HEK293 (cell line): ENCODE measurements at regions of chr12 and their contacts with region 1.

Region 1: DNA sequence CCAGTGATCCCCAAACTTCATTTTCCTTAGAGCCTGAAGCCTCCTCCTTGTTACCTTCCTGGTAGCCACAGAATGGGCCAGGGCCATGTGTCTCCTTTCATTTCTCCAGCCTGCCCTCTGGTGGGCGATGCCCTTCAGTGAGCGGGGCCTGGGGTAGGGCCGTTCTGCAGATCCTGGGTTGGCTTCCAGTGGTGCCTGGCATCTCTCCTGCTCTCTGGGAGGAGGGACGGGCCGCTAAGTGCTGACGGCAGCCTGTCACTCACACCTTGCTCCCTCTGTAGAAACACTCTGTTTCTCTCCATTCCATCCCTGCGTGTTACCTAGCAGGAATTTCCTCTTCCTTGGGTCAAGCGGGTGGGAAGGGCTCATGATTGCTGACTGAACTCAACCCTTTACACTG is 232.1 kb downstream of the CACNA1C start:
- H3K4me3 ChIP-seq: no peak overlapping the region
- H3K27ac ChIP-seq: no peak overlapping the region
- H3K4me1 ChIP-seq: no peaks in the 10 kb centered on the region
- CTCF ChIP-seq: peak; percentile 72

Region 2: DNA sequence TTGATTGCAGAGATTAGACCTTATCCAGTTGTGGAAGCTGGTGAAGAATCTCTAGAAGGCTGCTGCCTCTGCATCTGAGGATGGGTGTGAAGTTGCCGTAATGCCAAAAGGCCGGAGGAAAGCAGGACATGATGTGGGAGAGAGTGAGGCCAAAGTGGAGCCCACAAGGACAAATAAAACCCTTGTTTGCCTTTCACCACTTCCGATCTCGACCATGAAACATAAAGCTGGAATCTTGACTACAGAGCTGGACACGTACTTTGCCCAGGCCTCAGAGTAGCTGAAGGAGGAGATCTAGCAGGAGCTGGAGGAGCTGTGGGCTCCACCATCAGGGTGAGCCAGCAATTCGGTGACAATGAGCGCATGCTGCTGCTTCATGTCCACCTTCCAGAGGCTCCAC is 237.1 kb before region 1 on chr12:
- CTCF ChIA-PET with region 1: interaction called, 10 read pairs
- POLR2A ChIA-PET with region 1: no interaction called
- H3K4me3 ChIP-seq: no peak overlapping the region
- H3K27ac ChIP-seq: no peak overlapping the region
- H3K4me1 ChIP-seq: no peaks in the 10 kb centered on the region
- CTCF ChIP-seq: no peak

Region 3: DNA sequence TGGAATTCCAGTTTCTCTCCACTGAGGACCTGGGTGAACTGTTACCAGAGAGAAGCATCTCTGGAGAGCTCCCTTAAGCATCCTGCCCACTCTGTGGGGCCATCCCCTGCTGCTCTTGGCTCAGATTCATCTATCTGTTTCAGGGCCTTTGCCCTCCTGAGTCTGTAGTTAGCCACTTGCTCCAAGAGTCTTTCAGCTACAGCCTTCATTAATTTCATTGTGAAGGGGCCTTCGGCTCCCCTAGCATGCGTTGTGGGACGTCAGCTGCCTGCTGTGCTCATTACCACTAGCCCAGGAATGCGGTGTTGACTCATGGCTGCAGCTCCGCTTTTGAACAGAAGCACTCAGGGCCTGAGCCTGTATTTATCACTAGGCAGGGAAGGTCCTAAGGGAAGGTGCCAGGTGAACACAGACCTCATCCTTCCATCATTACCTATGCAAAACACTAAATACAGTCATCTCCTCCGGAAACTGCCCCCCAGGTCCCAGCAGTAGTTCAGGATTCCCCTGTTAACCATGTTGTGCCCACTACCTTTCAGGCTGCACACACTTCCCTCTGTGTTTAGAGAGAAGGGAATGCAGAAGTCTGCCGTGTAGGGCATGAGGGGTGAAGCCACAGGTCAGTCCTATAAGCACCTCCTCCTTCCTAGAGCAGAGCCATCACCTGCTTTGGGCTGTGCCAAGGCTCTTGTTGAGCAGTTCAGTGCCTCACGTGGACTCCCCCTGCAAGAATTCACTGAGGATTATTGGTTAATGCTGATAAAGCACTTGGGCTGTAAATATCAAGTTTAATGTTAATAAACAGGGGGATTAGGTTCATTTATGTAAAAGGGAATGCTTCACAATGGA is 40.6 kb before region 1 on chr12:
- CTCF ChIA-PET with region 1: no interaction called
- POLR2A ChIA-PET with region 1: no interaction called
- H3K4me3 ChIP-seq: no peak overlapping the region
- H3K27ac ChIP-seq: no peak overlapping the region
- H3K4me1 ChIP-seq: peaks cover 5% of the 10 kb centered on the region; the same call in 1 of the 2 replicates
- CTCF ChIP-seq: no peak

Region 4: DNA sequence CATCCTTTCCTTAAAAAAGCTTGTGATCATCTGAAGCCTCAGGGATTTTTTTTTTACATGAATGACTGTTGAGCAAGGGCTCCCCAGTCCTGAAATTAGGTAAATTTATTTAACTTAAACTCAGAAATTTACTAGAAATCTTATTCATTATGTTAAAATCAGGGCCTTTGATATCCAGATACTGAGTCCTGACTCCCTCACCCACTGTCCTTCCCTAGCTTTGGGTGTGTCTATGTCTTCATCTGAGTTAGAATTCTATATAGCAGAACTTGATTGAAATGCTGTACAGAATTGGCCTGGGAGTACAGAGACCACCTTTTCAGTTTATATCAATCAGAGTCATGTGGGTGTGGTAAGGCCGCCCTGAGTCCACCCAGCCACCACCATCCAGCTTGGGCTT is 27.9 kb after region 1 on chr12:
- CTCF ChIA-PET with region 1: no interaction called
- POLR2A ChIA-PET with region 1: no interaction called
- H3K4me3 ChIP-seq: no peak overlapping the region
- H3K27ac ChIP-seq: no peak overlapping the region
- H3K4me1 ChIP-seq: peaks cover 5% of the 10 kb centered on the region; the same call in 1 of the 2 replicates
- CTCF ChIP-seq: no peak

Region 5: DNA sequence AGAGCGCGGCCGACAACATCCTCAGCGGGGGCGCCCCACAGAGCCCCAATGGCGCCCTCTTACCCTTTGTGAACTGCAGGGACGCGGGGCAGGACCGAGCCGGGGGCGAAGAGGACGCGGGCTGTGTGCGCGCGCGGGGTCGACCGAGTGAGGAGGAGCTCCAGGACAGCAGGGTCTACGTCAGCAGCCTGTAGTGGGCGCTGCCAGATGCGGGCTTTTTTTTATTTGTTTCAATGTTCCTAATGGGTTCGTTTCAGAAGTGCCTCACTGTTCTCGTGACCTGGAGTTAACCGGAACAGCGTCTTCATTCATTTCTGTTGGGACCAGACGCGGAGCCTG is 406.1 kb after region 1 on chr12:
- CTCF ChIA-PET with region 1: no interaction called
- POLR2A ChIA-PET with region 1: no interaction called
- H3K4me3 ChIP-seq: no peak overlapping the region
- H3K27ac ChIP-seq: no peak overlapping the region
- H3K4me1 ChIP-seq: no peaks in the 10 kb centered on the region; the same call in 1 of the 2 replicates
- CTCF ChIP-seq: no peak

Region 6: DNA sequence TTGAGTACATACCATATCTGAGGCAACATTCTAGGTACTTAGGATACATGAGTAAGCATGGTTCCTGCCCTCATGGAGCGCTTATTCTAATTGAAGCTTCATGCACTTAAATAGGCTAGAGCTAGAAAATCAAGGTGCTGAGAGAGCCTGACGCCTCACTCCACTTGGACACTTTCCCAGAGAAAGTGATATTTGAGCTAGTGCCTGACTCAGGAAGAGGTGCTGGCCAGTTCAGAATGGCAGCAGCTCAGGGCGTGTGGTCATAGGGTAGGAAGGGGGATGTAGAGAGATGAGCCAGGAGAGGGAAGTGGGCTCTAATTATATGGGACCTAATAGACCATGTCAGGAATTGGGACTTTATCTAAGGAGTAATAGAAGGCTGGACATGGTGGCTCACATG is 639.2 kb after region 1 on chr12:
- CTCF ChIA-PET with region 1: no interaction called
- POLR2A ChIA-PET with region 1: no interaction called
- H3K4me3 ChIP-seq: no peak overlapping the region
- H3K27ac ChIP-seq: no peak overlapping the region
- H3K4me1 ChIP-seq: no peaks in the 10 kb centered on the region
- CTCF ChIP-seq: no peak